ENCODE measurements at regions of chr4 and their contacts with region 1.

Region 1: GRCh38 chr4:139651282-139652194 is 14.1 kb upstream of the MGST2 start:
- DNase-seq: peak; percentile 82 to 95
- H3K4me3 ChIP-seq: no peak overlapping the region
- CTCF ChIP-seq: peak in 1 of 3 donors; percentile 75
- POLR2A ChIP-seq: no peak

Region 2: DNA sequence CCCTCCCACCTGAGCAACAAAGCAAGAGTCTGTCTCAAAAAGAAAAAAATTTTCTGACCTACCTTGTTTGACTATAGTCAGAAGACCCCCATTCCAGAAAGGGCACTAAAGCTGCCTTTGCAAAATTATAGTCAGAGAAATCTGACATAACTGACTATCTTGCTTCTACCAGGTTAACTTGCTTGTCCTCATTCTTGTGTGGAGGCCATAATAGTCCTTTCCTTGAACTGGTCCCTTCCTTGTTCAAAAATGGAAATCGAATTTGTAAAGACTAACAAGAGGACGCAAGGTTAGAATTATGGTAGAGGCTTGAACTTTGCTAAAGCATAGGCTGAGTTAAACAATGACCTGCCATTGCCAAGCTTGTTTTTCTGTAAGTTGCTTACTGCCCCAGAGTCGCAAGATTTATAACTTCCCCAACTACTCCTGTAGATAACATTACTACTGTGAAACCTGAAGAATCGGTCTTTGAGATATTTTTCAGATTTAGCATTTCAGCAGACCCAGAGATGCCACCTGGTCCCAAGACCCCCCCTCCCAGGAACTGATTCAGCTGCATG is 152.4 kb before region 1 on chr4:
- intact Hi-C with region 1: loop called (anchors 5 kb)
- DNase-seq: no peak
- H3K4me3 ChIP-seq: no peak overlapping the region
- CTCF ChIP-seq: no peak
- POLR2A ChIP-seq: no peak

Region 3: GRCh38 chr4:139603576-139604387 is 47.8 kb before region 1 on chr4:
- intact Hi-C with region 1: loop called (anchors 10 kb)
- DNase-seq: peak in 1 of 2 donors; percentile 60
- H3K4me3 ChIP-seq: no peak overlapping the region
- CTCF ChIP-seq: no peak
- POLR2A ChIP-seq: no peak